ENCODE measurements at regions of chr15 and their contacts with region 1.

Region 1: GRCh38 chr15:75453703-75454470 is 2.4 kb upstream of the SIN3A start:
- DNase-seq: peak; percentile 97
- H3K4me3 Mint-ChIP-seq: peak overlapping the region; percentile 97
- H3K27ac Mint-ChIP-seq: peak overlapping the region; percentile 100
- H3K4me1 Mint-ChIP-seq: peaks cover 26% of the 10 kb centered on the region
- H3K27me3 Mint-ChIP-seq: no peaks in the 10 kb centered on the region

Region 2: GRCh38 chr15:74540761-74541493 is 913.0 kb before region 1 on chr15 and contains the start of gene ARID3B:
- intact Hi-C with region 1: loop called (anchors 5 kb)
- DNase-seq: peak; percentile 94
- H3K4me3 Mint-ChIP-seq: peak within 1 kb of the TSS; percentile 94
- H3K27ac Mint-ChIP-seq: peak within 1 kb of the TSS; percentile 98
- H3K4me1 Mint-ChIP-seq: peaks cover 46% of the 10 kb centered on the region
- H3K27me3 Mint-ChIP-seq: no peaks in the 10 kb centered on the region
- total RNA-seq, gene ARID3B: 35.6 and 41.2 TPM in 2 replicates

Region 3: DNA sequence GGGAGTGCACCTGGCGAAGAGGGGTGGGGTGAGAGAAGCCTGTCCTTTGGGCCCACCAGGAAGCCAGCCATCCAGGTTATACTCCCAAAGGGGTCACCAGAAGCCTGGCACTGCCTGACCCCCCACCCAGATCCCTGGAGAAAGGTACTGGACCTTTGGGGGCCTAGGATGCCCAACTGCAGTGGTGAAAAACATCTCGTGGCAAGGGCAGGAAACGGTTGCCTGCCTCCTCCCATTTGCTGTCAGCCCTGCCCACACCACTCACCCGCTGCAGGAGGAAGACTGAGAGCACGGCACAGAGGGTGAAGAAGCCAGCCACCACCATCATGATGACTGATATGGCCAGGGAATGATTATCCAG is 608.7 kb before region 1 on chr15:
- intact Hi-C with region 1: no loop called
- DNase-seq: peak; percentile 60
- H3K4me3 Mint-ChIP-seq: peak overlapping the region; percentile 18
- H3K27ac Mint-ChIP-seq: peak overlapping the region; percentile 92
- H3K4me1 Mint-ChIP-seq: peaks cover 38% of the 10 kb centered on the region
- H3K27me3 Mint-ChIP-seq: no peaks in the 10 kb centered on the region

Region 4: GRCh38 chr15:75023181-75023871 is 430.6 kb before region 1 on chr15 and contains the start of gene PPCDC:
- intact Hi-C with region 1: loop called (anchors 10 kb)
- DNase-seq: peak; percentile 94
- H3K4me3 Mint-ChIP-seq: peak within 1 kb of the TSS; percentile 96
- H3K27ac Mint-ChIP-seq: peak within 1 kb of the TSS; percentile 94
- H3K4me1 Mint-ChIP-seq: peaks cover 10% of the 10 kb centered on the region
- H3K27me3 Mint-ChIP-seq: no peaks in the 10 kb centered on the region
- total RNA-seq, gene PPCDC: 28.4 and 31.0 TPM in 2 replicates

Region 5: GRCh38 chr15:75347222-75347878 is 106.5 kb before region 1 on chr15:
- intact Hi-C with region 1: no loop called
- DNase-seq: no peak
- H3K4me3 Mint-ChIP-seq: peak overlapping the region; percentile 71
- H3K27ac Mint-ChIP-seq: no peak overlapping the region
- H3K4me1 Mint-ChIP-seq: peaks cover 19% of the 10 kb centered on the region
- H3K27me3 Mint-ChIP-seq: peaks cover 14% of the 10 kb centered on the region

Region 6: GRCh38 chr15:75416584-75416983 is 37.3 kb before region 1 on chr15:
- intact Hi-C with region 1: loop called (anchors 5 kb)
- DNase-seq: no peak
- H3K4me3 Mint-ChIP-seq: no peak overlapping the region
- H3K27ac Mint-ChIP-seq: peak overlapping the region; percentile 78
- H3K4me1 Mint-ChIP-seq: peaks cover 11% of the 10 kb centered on the region
- H3K27me3 Mint-ChIP-seq: no peaks in the 10 kb centered on the region

Region 7: GRCh38 chr15:75517233-75517632 is 63.3 kb after region 1 on chr15:
- intact Hi-C with region 1: no loop called
- DNase-seq: no peak
- H3K4me3 Mint-ChIP-seq: no peak overlapping the region
- H3K27ac Mint-ChIP-seq: no peak overlapping the region
- H3K4me1 Mint-ChIP-seq: no peaks in the 10 kb centered on the region
- H3K27me3 Mint-ChIP-seq: no peaks in the 10 kb centered on the region

Region 8: DNA sequence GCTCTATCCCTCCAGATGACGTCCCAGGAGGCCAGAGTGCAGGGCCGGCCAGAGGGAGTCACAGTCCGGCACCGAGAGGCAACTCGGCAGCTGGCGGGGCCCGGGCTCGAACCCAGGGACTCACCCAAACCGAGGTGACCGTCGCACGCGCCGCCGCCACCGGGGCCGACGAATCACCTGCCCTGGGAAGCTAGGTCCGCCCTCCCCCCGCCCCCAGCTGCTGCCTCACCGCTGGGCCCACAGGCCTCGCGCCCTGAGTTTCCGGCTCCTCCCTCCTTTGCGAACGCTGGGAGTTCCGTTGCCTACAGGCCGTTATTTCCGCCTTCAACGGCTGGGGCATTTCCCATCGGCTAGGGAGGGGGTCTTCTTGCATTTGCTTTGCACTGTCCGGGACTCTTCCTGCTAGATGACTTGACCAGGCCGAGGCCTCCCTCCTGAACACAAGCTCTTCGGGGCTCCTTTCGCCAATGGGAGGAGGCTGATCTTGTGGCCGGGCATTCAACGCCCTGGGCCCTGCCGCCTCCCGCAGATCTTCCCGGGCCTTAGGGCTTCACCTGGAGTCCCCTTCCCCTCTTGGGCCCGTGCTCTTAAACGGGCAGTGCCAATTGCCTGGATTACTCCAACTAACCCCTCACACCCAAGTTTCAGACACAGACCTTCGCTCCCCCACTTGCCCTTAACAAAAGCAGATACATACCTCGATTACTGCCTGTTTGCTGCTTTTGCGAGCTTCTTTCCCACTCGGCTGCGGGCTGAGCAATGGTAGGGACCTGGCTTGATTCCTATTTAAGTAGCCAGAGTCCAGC is 171.9 kb after region 1 on chr15 and contains the start of gene SNUPN:
- intact Hi-C with region 1: loop called (anchors 1 kb)
- DNase-seq: peak; percentile 88
- H3K4me3 Mint-ChIP-seq: peak within 1 kb of the TSS; percentile 92
- H3K27ac Mint-ChIP-seq: peak within 1 kb of the TSS; percentile 97
- H3K4me1 Mint-ChIP-seq: peaks cover 33% of the 10 kb centered on the region
- H3K27me3 Mint-ChIP-seq: no peaks in the 10 kb centered on the region
- total RNA-seq, gene SNUPN: 32.7 and 40.9 TPM in 2 replicates

Region 9: DNA sequence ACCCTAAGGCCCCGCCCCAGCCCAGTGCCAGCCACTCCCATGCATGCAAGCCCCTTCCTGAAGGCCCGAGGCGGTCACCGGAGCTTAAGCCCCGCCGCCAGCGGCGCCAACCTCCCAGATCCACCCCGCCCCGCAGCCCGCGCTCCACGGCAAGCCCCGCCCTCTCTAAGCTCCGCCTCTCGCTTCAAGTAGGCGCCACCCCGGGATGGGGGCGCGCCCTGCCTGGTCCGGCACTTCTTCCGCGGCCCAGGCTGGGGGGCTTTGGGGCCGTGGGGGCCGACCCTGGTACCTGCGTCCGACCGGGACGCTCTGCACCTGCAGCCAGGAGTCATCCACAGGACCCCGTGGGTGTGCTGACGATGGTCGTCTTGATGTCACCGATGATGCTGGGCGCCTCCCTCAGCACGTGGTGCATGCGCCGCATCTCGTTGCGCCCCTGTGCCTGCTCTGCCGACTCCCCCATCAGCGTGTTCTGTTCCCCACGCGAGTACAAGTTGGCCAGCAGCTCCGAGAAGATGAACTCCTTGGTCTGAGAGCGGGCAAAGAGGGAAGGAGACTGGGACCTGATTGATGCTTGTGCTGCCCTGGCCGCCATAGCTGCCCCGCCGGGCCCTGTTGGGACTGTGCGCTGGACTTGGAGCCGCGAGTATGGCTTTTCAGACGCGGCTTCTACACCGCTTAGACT is 284.9 kb after region 1 on chr15:
- intact Hi-C with region 1: loop called (anchors 5 kb)
- DNase-seq: peak; percentile 88
- H3K4me3 Mint-ChIP-seq: peak overlapping the region; percentile 86
- H3K27ac Mint-ChIP-seq: peak overlapping the region; percentile 23
- H3K4me1 Mint-ChIP-seq: peaks cover 7% of the 10 kb centered on the region
- H3K27me3 Mint-ChIP-seq: peaks cover 32% of the 10 kb centered on the region